Activated CD8-positive, alpha-beta memory T cell treated with anti-CD3 and anti-CD28 coated beads, Interleukin-2, amount 10 ng/mL, durations not matched to agents 7 days and 5 days (primary cell): ENCODE measurements at regions of chr6 and their contacts with region 1.

Region 1: GRCh38 chr6:157323255-157323965 is at the start of gene TMEM242:
- DNase-seq: peak; percentile 92
- ATAC-seq: peak; percentile 94
- H3K4me3 Mint-ChIP-seq: peak within 1 kb of the TSS; percentile 98
- H3K27ac Mint-ChIP-seq: peak within 1 kb of the TSS; percentile 88
- H3K4me1 Mint-ChIP-seq: peaks cover 56% of the 10 kb centered on the region
- H3K27me3 Mint-ChIP-seq: peaks cover 17% of the 10 kb centered on the region
- total RNA-seq, gene TMEM242: 10.3 to 14.1 TPM

Region 2: GRCh38 chr6:156060013-156060412 is 1263.4 kb before region 1 on chr6:
- CTCF ChIA-PET with region 1: no interaction called
- DNase-seq: no peak
- ATAC-seq: no peak
- H3K4me3 Mint-ChIP-seq: no peak overlapping the region
- H3K27ac Mint-ChIP-seq: no peak overlapping the region
- H3K4me1 Mint-ChIP-seq: no peaks in the 10 kb centered on the region
- H3K27me3 Mint-ChIP-seq: no peaks in the 10 kb centered on the region

Region 3: GRCh38 chr6:157198419-157199279 is 124.8 kb before region 1 on chr6:
- CTCF ChIA-PET with region 1: no interaction called
- DNase-seq: no peak
- ATAC-seq: no peak
- H3K4me3 Mint-ChIP-seq: no peak overlapping the region
- H3K27ac Mint-ChIP-seq: no peak overlapping the region
- H3K4me1 Mint-ChIP-seq: no peaks in the 10 kb centered on the region
- H3K27me3 Mint-ChIP-seq: no peaks in the 10 kb centered on the region

Region 4: GRCh38 chr6:157304899-157305663 is 18.3 kb before region 1 on chr6:
- CTCF ChIA-PET with region 1: no interaction called
- DNase-seq: no peak
- ATAC-seq: no peak
- H3K4me3 Mint-ChIP-seq: no peak overlapping the region
- H3K27ac Mint-ChIP-seq: no peak overlapping the region
- H3K4me1 Mint-ChIP-seq: peaks cover 8% of the 10 kb centered on the region
- H3K27me3 Mint-ChIP-seq: no peaks in the 10 kb centered on the region

Region 5: GRCh38 chr6:157335829-157336228 is 12.4 kb after region 1 on chr6:
- CTCF ChIA-PET with region 1: interaction called, 62 read pairs
- DNase-seq: no peak
- ATAC-seq: no peak
- H3K4me3 Mint-ChIP-seq: no peak overlapping the region
- H3K27ac Mint-ChIP-seq: no peak overlapping the region
- H3K4me1 Mint-ChIP-seq: no peaks in the 10 kb centered on the region
- H3K27me3 Mint-ChIP-seq: peaks cover 61% of the 10 kb centered on the region

Region 6: DNA sequence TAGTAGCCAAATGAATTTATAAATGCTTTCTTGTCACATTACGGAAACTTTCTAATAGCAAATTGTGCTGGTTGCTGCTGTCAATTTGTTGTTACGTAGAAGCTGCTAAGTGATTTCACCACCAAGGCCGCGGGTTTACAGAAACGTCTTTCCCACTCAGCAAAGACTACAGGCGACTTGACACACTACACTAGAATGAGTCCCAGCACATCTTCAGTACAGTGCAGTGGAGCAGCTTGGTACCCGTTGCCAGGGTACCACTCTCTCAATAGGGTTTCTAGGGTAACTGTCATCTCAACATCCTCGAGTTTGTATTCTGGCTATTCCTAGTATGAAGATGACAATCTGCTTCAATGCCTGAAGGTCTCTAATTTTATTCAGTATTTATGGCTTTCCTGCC is 34.9 kb after region 1 on chr6:
- CTCF ChIA-PET with region 1: no interaction called
- DNase-seq: no peak
- ATAC-seq: no peak
- H3K4me3 Mint-ChIP-seq: no peak overlapping the region
- H3K27ac Mint-ChIP-seq: no peak overlapping the region
- H3K4me1 Mint-ChIP-seq: no peaks in the 10 kb centered on the region
- H3K27me3 Mint-ChIP-seq: peaks cover 26% of the 10 kb centered on the region

Region 7: GRCh38 chr6:157667211-157668008 is 344.0 kb after region 1 on chr6:
- CTCF ChIA-PET with region 1: interaction called, 61 read pairs
- DNase-seq: peak; percentile 68
- ATAC-seq: peak; percentile 60
- H3K4me3 Mint-ChIP-seq: no peak overlapping the region
- H3K27ac Mint-ChIP-seq: no peak overlapping the region
- H3K4me1 Mint-ChIP-seq: peaks cover 17% of the 10 kb centered on the region
- H3K27me3 Mint-ChIP-seq: peaks cover 5% of the 10 kb centered on the region